ENCODE measurements at regions of chr1 and their contacts with region 1.

Region 1: GRCh38 chr1:200753650-200754198 is 15.0 kb downstream of the CAMSAP2 start:
- DNase-seq: no peak
- CTCF ChIP-seq: no peak

Region 2: DNA sequence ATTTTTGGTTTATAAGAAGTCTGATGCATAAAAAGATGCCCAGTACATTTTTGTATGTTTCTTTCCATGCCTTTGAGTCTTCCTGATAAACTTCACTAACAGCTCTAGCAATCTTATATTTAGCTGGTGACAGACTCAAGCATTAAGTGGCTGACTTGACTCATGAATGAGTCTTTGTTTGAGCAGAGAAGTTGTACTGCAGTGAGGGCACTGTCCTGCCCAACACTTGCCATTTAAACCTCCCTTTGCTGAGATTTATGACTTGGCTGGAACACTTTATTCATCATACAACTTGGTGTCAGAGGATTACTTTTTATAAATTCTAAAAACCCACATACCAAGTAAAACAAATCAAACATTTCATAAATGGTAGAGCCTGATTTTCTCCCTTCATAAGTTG is 29.7 kb before region 1 on chr1:
- CTCF ChIA-PET with region 1: no interaction called
- POLR2A ChIA-PET with region 1: no interaction called
- DNase-seq: no peak
- CTCF ChIP-seq: no peak

Region 3: DNA sequence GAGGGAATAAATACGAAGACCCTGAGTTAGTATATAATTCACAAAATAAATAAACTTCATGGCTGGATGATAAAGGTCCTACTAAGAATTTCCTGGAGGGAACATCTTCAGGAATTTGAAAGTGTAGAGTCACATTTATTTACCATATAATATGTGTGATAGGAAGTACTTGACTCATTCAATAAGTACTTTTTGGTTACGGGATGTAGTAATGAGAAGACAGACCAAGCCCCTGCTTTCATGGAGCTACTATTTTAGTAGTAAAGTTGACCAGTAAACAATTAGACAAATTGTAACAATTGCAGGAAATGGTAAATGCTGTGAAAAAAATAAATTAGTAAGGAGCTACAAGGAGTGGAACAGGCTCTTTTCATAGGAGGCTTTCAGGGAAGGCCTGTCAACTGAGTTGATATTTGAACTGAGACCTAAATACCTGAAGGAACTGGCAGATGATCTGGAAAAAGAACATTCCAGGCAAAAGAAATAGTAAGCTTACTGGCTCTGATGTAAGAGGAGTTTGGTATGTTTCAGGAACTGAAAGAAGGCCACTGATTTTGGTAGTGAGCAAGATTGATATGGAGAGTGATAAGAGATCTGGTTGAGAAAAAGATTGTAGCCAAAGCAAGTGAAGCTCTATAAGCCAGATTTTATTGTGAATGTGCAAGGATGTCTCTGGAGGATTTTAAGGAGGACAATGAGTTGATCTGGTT is 21.2 kb after region 1 on chr1:
- CTCF ChIA-PET with region 1: interaction called, 12 read pairs
- POLR2A ChIA-PET with region 1: no interaction called
- DNase-seq: peak; percentile 34
- CTCF ChIP-seq: no peak